ENCODE measurements at regions of chr20 and their contacts with region 1.

Region 1: DNA sequence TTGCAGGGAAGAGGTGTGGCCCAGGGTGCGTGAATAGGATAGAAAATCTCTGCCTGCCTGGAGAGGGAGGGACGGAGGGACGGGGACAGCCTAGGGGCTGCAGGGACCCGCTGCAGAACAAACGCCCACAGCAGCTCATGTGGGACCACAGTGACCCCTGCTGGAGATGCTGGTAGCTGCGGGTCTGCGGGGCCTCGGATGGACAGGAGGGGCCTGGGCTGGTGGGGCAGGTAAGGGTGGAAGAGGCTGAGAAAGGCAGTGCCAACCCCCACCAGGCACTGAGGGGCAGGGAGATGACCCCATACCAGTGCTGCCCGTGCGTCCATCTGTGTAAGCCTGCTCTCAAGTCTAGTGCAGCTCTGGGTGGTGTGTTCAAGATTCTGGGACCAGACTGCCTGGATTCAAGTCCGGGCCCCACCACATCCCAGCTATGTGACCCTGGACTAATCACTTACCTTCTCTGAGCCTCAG is 39.4 kb downstream of the KIAA1755 start:
- DNase-seq: peak; percentile 52
- ATAC-seq: peak; percentile 57
- H3K4me3 ChIP-seq: no peak overlapping the region
- H3K27ac ChIP-seq: peak overlapping the region; percentile 6; the same call in 1 of the 2 replicates
- H3K4me1 ChIP-seq: peaks cover 24% of the 10 kb centered on the region
- H3K27me3 ChIP-seq: no peaks in the 10 kb centered on the region
- CTCF ChIP-seq: peak; percentile 89
- POLR2A ChIP-seq: peak; percentile 43; the same call in 1 of the 2 replicates
- RAD21 ChIP-seq: peak; percentile 95

Region 2: DNA sequence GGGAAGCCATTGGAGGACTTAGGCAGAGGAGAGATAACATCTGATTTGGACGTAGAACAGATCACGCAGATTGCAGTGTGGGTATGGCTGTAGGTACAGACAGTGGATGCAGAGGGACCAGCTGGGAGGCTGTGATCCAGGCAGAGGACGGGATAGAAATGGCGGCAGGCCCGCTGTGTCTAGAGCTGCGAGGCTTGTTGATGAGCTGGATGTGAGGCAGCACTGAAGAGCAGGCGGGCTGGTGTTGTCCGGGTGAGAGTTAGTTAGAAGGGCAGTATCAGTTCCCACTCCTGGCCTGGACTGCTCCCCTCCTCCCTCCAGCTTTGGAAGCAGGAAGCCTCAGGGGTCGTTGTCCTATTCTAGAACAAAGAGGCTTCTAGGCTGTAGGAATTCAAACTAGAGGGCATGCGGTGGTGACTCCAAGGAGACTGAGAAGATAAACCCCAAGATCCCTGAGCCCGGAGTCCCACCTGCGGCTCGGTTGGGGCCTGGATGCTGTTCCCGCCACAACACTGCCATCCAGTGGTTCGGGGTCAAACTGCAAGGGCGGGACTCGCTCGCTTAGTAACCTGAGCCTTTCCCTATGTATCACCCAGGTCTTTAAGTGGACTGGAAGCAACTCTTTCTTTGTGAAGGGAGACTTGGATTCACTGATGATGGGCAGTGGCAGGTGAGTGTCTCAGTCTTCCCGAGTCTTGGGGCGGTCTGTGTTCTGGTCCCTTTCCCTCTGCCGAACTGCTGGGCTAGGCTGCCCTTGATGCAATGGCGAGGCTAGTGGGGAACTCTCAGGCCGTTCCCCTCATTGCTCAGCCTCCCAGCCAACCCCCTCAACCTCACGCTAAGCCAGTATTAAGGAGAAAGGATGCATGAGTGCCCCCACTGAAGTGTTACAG is 1334.0 kb before region 1 on chr20:
- CTCF ChIA-PET with region 1: no interaction called
- POLR2A ChIA-PET with region 1: no interaction called
- dilution Hi-C with region 1: no loop called
- in situ Hi-C with region 1: no loop called
- intact Hi-C with region 1: no loop called
- DNase-seq: peak; percentile 74
- ATAC-seq: peak; percentile 99
- H3K4me3 ChIP-seq: no peak overlapping the region
- H3K27ac ChIP-seq: no peak overlapping the region
- H3K4me1 ChIP-seq: no peaks in the 10 kb centered on the region; the same call in 1 of the 2 replicates
- H3K27me3 ChIP-seq: peaks cover 2% of the 10 kb centered on the region; the same call in 1 of the 2 replicates
- CTCF ChIP-seq: peak; percentile 96
- POLR2A ChIP-seq: peak; percentile 44; the same call in 1 of the 2 replicates
- RAD21 ChIP-seq: peak; percentile 98

Region 3: GRCh38 chr20:37630166-37630565 is 591.0 kb before region 1 on chr20:
- CTCF ChIA-PET with region 1: no interaction called
- POLR2A ChIA-PET with region 1: interaction called, 16 read pairs
- dilution Hi-C with region 1: no loop called
- in situ Hi-C with region 1: no loop called
- intact Hi-C with region 1: no loop called
- DNase-seq: no peak
- ATAC-seq: no peak
- H3K4me3 ChIP-seq: no peak overlapping the region
- H3K27ac ChIP-seq: no peak overlapping the region
- H3K4me1 ChIP-seq: no peaks in the 10 kb centered on the region
- H3K27me3 ChIP-seq: peaks cover 21% of the 10 kb centered on the region
- CTCF ChIP-seq: no peak
- POLR2A ChIP-seq: no peak
- RAD21 ChIP-seq: no peak

Region 4: DNA sequence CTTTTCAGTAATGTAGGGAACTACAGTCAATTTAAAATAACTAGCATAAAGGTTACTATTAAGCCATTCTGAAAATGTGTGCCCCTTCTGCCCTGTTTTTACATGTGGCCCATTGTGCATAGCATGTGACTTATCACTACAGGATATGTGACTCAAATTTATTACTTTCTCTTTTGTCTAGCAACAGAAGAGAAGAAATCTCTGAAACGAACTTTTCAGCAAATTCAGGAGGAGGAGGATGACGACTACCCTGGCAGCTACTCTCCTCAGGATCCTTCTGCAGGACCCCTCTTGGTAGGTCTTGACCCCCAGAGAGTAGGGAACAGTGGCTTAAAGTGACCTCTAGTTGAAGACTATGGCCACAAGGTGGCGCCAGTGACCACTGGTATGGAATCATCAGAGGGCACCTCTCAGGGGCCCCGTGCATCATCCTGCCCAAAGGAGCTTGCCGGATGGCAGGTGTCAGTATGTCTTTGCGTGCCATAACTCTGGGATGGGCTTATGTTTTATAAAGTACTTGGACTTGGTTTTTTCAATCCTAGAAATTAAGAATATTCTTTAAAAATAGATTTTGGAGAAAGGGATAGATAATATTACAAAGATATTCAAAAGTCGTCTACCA is 163.7 kb before region 1 on chr20:
- CTCF ChIA-PET with region 1: interaction called, 27 read pairs
- POLR2A ChIA-PET with region 1: no interaction called
- dilution Hi-C with region 1: no loop called
- in situ Hi-C with region 1: loop called (anchors 5 kb)
- intact Hi-C with region 1: loop called (anchors 1 kb)
- DNase-seq: peak; percentile 67
- ATAC-seq: peak; percentile 94
- H3K4me3 ChIP-seq: no peak overlapping the region
- H3K27ac ChIP-seq: no peak overlapping the region
- H3K4me1 ChIP-seq: peaks cover 6% of the 10 kb centered on the region
- H3K27me3 ChIP-seq: no peaks in the 10 kb centered on the region
- CTCF ChIP-seq: peak; percentile 80
- POLR2A ChIP-seq: no peak
- RAD21 ChIP-seq: peak; percentile 90

Region 5: DNA sequence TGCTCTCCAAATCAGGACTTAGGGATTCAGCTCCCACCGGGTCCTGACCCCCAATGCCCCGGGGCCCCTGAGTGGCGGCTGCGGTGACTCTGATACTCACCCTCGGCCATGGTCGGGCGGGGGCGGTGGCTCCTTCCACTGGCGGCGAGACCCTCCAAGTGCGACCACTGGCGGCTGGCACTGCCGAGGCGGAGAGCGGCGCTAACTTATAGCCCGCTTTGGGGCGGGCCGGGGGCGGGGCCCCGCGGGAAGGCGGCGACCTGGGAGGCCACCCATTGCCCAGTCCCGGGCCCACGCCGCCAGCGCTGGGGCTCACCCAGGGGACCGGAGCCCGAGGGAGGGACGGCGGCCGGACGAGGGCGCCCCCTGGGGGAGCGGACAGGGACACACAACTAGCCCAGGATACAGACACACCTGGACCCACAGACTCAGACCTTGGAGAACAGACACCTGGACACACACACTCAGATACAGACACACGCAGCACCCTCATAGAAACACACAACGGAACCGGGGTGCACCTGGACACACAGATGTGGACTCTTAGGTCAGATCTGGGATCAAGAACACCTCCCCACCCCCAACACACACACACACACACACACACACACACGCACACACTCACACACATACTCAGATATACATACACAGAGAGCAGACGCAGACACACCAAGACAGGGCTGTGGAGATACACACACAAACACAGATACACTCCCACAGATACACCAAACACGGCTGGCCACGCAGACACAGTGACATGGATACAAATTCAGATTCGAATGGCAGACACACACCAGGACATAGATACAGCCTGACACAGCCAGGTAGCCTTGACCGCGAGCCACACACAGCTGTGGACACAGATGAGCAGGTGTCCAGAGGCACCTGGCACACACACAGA is 55.8 kb before region 1 on chr20 and contains the start of gene TGM2:
- CTCF ChIA-PET with region 1: interaction called, 9 read pairs
- POLR2A ChIA-PET with region 1: no interaction called
- dilution Hi-C with region 1: no loop called
- in situ Hi-C with region 1: loop called (anchors 5 kb)
- intact Hi-C with region 1: loop called (anchors 1 kb)
- DNase-seq: peak; percentile 69
- ATAC-seq: peak; percentile 79
- H3K4me3 ChIP-seq: peak within 1 kb of the TSS; percentile 50
- H3K27ac ChIP-seq: peak within 1 kb of the TSS; percentile 53
- H3K4me1 ChIP-seq: peaks cover 48% of the 10 kb centered on the region
- H3K27me3 ChIP-seq: no peaks in the 10 kb centered on the region
- CTCF ChIP-seq: peak; percentile 81
- POLR2A ChIP-seq: no peak
- RAD21 ChIP-seq: peak; percentile 87
- total RNA-seq, gene TGM2: 237 and 268 TPM in 2 replicates

Region 6: DNA sequence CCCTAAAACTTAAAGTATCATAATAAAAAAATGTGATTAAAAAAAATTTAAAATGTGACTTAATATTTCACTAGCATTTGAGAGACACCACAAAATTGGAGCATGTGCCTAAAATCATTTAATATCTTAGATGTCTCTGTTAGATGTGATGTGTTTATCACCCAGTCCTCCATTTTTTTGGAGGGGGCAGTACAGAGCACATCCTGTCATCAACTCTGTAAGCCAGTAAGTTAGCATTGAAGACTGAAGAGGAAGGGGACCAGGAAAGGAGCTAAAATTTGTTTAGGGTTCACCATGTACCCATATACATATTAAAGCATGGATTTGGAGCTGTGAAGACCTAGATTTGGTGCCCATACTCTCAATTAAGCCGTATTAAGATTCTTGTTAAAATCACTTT is 329.1 kb after region 1 on chr20:
- CTCF ChIA-PET with region 1: no interaction called
- POLR2A ChIA-PET with region 1: no interaction called
- dilution Hi-C with region 1: no loop called
- in situ Hi-C with region 1: no loop called
- intact Hi-C with region 1: no loop called
- DNase-seq: no peak
- ATAC-seq: no peak
- H3K4me3 ChIP-seq: no peak overlapping the region
- H3K27ac ChIP-seq: no peak overlapping the region
- H3K4me1 ChIP-seq: no peaks in the 10 kb centered on the region
- H3K27me3 ChIP-seq: no peaks in the 10 kb centered on the region
- CTCF ChIP-seq: no peak
- POLR2A ChIP-seq: no peak
- RAD21 ChIP-seq: no peak